CD4-positive, alpha-beta T cell (primary cell): ENCODE measurements at regions of chr11 and their contacts with region 1.

Region 1: DNA sequence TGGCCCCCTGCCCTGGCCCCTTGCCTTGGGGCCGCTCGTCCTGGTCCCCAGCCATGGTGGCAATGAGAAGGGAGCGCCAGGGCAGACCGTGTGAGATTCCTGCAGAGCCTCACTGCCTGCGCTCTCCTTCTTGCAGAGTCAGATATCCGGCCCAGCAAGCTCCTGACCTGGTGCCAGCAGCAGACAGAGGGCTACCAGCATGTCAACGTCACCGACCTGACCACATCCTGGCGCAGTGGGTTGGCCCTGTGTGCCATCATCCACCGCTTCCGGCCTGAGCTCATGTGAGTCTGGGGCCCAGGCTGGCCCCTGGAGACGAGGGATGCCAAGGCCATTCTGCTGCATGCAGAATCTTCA is 114.1 kb downstream of the MICAL2 start:
- DNase-seq: peak; percentile 69 to 97 (median 83)
- ATAC-seq: peak; percentile 90
- H3K4me3 ChIP-seq: peak overlapping the region; percentile 49
- H3K4me3 Mint-ChIP-seq: peak overlapping the region; percentile 78
- H3K27ac ChIP-seq: peak overlapping the region; percentile 67 to 79
- H3K27ac Mint-ChIP-seq: peak overlapping the region; percentile 92
- H3K4me1 ChIP-seq: peaks cover 48% of the 10 kb centered on the region
- H3K4me1 Mint-ChIP-seq: peaks cover 51% of the 10 kb centered on the region
- H3K27me3 ChIP-seq: no peaks in the 10 kb centered on the region
- H3K27me3 Mint-ChIP-seq: no peaks in the 10 kb centered on the region
- CTCF ChIP-seq: no peak

Region 2: DNA sequence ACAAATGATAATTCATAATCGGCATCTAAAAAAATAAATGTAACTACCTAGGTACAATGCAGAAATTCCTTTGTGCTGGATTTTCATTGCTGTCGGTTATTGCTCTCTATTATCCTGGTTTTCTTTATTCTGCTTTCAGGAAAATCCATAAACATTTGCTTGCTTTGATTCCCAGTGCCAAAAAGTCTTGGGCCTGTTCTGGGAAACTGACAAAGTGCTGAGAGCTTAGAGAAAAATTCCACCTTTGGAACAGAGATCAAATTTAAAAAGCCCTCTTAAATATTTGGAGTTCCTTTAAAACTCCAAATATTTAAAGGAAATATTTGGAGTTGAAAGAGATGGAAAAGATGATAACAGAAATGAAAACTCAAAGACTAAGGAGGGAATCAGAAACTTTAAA is 1279.3 kb before region 1 on chr11:
- CTCF ChIA-PET with region 1: no interaction called
- POLR2A ChIA-PET with region 1: no interaction called
- intact Hi-C with region 1: no loop called
- DNase-seq: no peak
- ATAC-seq: no peak
- H3K4me3 ChIP-seq: no peak overlapping the region
- H3K4me3 Mint-ChIP-seq: no peak overlapping the region
- H3K27ac ChIP-seq: no peak overlapping the region
- H3K27ac Mint-ChIP-seq: no peak overlapping the region
- H3K4me1 ChIP-seq: no peaks in the 10 kb centered on the region
- H3K4me1 Mint-ChIP-seq: no peaks in the 10 kb centered on the region
- H3K27me3 ChIP-seq: no peaks in the 10 kb centered on the region
- H3K27me3 Mint-ChIP-seq: peaks cover 20% of the 10 kb centered on the region
- CTCF ChIP-seq: no peak

Region 3: DNA sequence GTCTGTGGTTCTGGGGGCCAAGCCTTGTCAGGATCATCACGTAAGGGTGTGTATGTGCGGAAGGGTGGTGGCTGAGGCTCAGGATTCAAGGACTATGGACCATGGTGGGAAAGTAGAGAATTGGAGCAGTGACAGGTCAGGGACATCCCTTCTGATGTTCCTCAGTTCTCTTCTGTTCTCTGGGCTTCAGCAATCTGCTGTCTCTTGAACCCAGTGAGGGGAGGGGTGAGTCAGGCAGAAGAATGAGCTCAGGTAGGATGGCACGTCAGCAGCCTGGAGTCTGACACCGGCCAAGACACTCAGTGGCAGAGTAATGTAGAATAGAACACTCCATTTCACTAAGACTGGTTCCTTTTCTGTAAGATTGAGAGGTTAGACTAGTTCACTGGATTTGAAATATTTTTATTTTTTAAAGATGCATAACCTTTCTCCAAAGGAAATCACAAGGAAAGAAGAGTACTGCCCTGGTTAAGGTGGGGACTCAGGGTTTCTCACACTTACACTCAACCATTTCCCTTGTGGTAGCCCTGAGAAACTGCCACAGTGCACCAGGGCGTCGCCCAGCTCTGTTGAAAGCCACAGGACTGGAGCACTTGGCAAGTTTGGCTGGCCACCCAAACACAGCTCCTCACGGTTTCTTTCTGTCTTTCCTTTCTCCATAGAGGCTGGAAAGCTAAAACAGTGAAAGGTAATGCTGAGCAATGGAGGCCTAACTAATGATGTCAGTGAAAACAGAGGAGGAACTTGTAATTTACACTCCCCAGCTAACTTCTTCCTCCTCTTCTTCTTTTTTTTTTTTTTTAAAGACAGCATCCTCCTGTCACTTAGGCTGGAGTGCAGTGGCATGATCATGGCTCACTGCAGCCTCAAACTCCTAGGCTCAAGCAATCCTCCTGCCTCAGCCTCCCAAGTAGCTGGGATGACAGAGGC is 137.2 kb before region 1 on chr11:
- CTCF ChIA-PET with region 1: no interaction called
- POLR2A ChIA-PET with region 1: interaction called, 13 read pairs
- intact Hi-C with region 1: no loop called
- DNase-seq: peak in 6 of 14 experiments; percentile 15 to 82 (median 58)
- ATAC-seq: peak; percentile 79
- H3K4me3 ChIP-seq: no peak overlapping the region
- H3K4me3 Mint-ChIP-seq: peak overlapping the region; percentile 59
- H3K27ac ChIP-seq: peak overlapping the region in 1 of 2 donors; percentile 46
- H3K27ac Mint-ChIP-seq: peak overlapping the region; percentile 79
- H3K4me1 ChIP-seq: peaks cover 65% of the 10 kb centered on the region
- H3K4me1 Mint-ChIP-seq: peaks cover 72% of the 10 kb centered on the region
- H3K27me3 ChIP-seq: no peaks in the 10 kb centered on the region
- H3K27me3 Mint-ChIP-seq: no peaks in the 10 kb centered on the region
- CTCF ChIP-seq: no peak

Region 4: GRCh38 chr11:12110201-12110713 is 114.3 kb before region 1 on chr11 and contains the start of gene MICAL2:
- CTCF ChIA-PET with region 1: no interaction called
- POLR2A ChIA-PET with region 1: interaction called, 13 read pairs
- intact Hi-C with region 1: loop called in 1 of 2 experiments (anchors 5 kb)
- DNase-seq: peak; percentile 53 to 93 (median 73)
- ATAC-seq: peak; percentile 97
- H3K4me3 ChIP-seq: peak within 1 kb of the TSS; percentile 65
- H3K4me3 Mint-ChIP-seq: peak within 1 kb of the TSS; percentile 85
- H3K27ac ChIP-seq: no peak within 1 kb of the TSS
- H3K27ac Mint-ChIP-seq: peak within 1 kb of the TSS; percentile 12
- H3K4me1 ChIP-seq: peaks cover 32% of the 10 kb centered on the region
- H3K4me1 Mint-ChIP-seq: peaks cover 22% of the 10 kb centered on the region
- H3K27me3 ChIP-seq: no peaks in the 10 kb centered on the region
- H3K27me3 Mint-ChIP-seq: no peaks in the 10 kb centered on the region
- CTCF ChIP-seq: no peak
- total RNA-seq, gene MICAL2: 12.8 to 14.1 TPM

Region 5: GRCh38 chr11:12137938-12138731 is 86.4 kb before region 1 on chr11:
- CTCF ChIA-PET with region 1: no interaction called
- POLR2A ChIA-PET with region 1: interaction called, 11 read pairs
- intact Hi-C with region 1: no loop called
- DNase-seq: no peak
- ATAC-seq: no peak
- H3K4me3 ChIP-seq: no peak overlapping the region
- H3K4me3 Mint-ChIP-seq: no peak overlapping the region
- H3K27ac ChIP-seq: no peak overlapping the region
- H3K27ac Mint-ChIP-seq: peak overlapping the region; percentile 78
- H3K4me1 ChIP-seq: peaks cover 55% of the 10 kb centered on the region
- H3K4me1 Mint-ChIP-seq: peaks cover 67% of the 10 kb centered on the region
- H3K27me3 ChIP-seq: no peaks in the 10 kb centered on the region
- H3K27me3 Mint-ChIP-seq: no peaks in the 10 kb centered on the region
- CTCF ChIP-seq: no peak

Region 6: GRCh38 chr11:12189543-12190235 is 34.8 kb before region 1 on chr11:
- CTCF ChIA-PET with region 1: interaction called, 3 read pairs
- POLR2A ChIA-PET with region 1: interaction called, 69 read pairs
- intact Hi-C with region 1: loop called (anchors 2 to 5 kb)
- DNase-seq: peak; percentile 25 to 77 (median 40)
- ATAC-seq: peak; percentile 53
- H3K4me3 ChIP-seq: peak overlapping the region; percentile 32
- H3K4me3 Mint-ChIP-seq: peak overlapping the region; percentile 66
- H3K27ac ChIP-seq: peak overlapping the region in 1 of 2 donors; percentile 14
- H3K27ac Mint-ChIP-seq: peak overlapping the region; percentile 73
- H3K4me1 ChIP-seq: peaks cover 31% of the 10 kb centered on the region
- H3K4me1 Mint-ChIP-seq: peaks cover 50% of the 10 kb centered on the region
- H3K27me3 ChIP-seq: no peaks in the 10 kb centered on the region
- H3K27me3 Mint-ChIP-seq: no peaks in the 10 kb centered on the region
- CTCF ChIP-seq: no peak

Region 7: DNA sequence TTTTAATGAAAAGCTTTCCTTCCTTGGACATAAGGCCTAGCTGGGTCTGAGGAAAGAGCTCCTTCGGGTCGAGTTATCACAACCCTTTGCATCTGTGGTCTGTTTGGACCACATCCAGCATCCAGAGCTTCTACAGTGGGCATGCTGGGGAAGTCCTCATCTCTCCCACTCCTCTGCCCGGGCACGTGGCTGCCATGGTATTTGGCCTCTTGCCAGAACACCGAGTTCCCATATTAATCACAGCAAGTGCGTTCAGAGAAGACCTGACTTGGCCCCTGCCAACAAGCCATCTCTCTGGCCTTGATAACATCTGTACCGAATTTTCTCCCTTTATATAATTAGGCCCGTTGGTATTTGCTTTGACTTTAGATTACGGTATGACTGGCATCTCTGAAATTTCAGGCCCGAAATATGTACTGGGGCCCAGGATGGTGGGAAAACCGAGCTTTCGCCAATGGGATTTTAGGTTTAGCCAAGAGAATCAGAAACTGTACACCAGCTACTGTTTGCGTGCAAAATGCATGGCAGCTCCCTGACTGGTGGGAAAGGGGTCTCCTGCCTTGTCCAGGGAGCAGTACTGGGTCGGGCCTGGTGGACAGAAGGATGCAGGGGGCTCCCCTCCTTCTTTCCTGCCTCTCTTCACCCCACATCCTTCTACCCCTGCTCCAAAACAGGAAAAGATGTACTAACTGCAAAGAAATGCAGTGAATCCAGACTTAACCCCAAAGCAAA is 24.1 kb before region 1 on chr11:
- CTCF ChIA-PET with region 1: interaction called, 3 read pairs
- POLR2A ChIA-PET with region 1: interaction called, 69 read pairs
- intact Hi-C with region 1: loop called in 1 of 2 experiments (anchors 2 kb)
- DNase-seq: peak in 2 of 14 experiments; percentile 27 to 28
- ATAC-seq: no peak
- H3K4me3 ChIP-seq: no peak overlapping the region
- H3K4me3 Mint-ChIP-seq: no peak overlapping the region
- H3K27ac ChIP-seq: peak overlapping the region in 1 of 2 donors; percentile 22
- H3K27ac Mint-ChIP-seq: peak overlapping the region; percentile 89
- H3K4me1 ChIP-seq: peaks cover 53% of the 10 kb centered on the region
- H3K4me1 Mint-ChIP-seq: peaks cover 70% of the 10 kb centered on the region
- H3K27me3 ChIP-seq: no peaks in the 10 kb centered on the region
- H3K27me3 Mint-ChIP-seq: no peaks in the 10 kb centered on the region
- CTCF ChIP-seq: no peak

Region 8: DNA sequence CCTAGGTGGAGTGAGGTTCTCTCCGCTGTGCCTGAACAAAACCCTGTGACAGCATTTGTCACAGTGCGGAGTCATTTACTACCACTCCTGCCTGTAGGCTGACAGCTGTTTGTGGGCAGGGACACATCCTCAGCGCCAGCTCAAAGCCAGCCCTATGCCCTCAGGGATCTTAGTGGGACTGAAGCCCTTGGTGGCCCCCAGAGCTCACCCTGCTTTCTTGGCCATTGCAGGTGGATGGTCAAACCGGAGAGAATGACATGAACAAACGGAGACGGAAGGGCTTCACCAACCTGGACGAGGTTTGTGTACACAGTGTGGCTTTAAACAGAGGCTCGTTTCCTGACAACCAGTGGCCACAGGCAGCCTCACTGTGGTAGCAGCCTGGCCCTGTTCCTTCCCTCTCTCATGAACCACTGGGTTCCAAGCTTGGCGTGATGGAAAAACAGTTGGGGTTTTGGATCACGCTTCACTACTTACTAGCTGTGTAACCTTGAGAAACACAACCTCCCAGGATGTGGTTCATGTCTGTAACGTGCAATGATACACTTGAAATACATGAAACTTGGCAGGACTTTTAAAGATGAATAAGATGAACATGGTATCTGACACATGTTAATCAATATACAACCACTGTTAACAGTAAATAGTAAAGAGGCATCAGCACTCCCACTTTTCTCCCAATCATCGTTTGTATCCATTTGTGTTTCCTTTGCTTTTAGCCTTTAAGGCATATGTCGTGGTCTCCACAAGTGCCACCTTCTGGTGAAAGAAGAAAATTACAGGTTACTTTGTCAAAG is 11.6 kb after region 1 on chr11:
- CTCF ChIA-PET with region 1: interaction called, 3 read pairs
- POLR2A ChIA-PET with region 1: interaction called, 33 read pairs
- intact Hi-C with region 1: no loop called
- DNase-seq: peak in 9 of 14 experiments; percentile 4 to 83 (median 40)
- ATAC-seq: peak; percentile 85
- H3K4me3 ChIP-seq: peak overlapping the region; percentile 7
- H3K4me3 Mint-ChIP-seq: peak overlapping the region; percentile 82
- H3K27ac ChIP-seq: peak overlapping the region in 1 of 2 donors; percentile 59
- H3K27ac Mint-ChIP-seq: peak overlapping the region; percentile 92
- H3K4me1 ChIP-seq: peaks cover 15% of the 10 kb centered on the region
- H3K4me1 Mint-ChIP-seq: peaks cover 30% of the 10 kb centered on the region
- H3K27me3 ChIP-seq: no peaks in the 10 kb centered on the region
- H3K27me3 Mint-ChIP-seq: no peaks in the 10 kb centered on the region
- CTCF ChIP-seq: peak; percentile 92

Region 9: DNA sequence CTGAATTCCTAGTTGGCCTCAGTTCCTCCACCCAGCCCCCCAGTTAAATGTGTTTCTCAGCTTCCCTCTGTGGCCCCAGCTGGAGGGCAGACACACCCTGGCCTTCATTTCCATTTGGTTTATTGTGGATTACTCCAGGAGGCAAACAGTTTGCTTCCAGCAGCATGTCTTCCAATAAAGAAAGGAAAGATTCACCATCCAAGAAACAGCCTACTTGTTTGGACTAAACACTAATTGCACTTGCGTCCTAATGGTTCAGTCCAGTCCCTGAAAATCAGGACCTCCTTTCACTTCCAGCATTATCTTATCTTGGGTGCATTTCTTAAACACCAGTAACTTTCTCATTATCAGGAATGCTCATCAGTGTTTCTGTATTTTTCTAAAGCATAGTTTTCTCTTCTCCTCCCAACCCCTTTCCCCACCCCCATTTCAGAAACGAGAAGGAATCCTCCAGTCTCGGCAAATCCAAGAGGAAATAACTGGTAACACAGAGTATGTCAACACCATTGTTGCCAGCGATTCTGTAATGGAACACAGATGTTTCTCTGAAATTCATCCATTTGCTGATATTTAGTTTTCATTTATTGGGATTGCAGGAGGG is 283.7 kb after region 1 on chr11:
- CTCF ChIA-PET with region 1: no interaction called
- POLR2A ChIA-PET with region 1: no interaction called
- intact Hi-C with region 1: no loop called
- DNase-seq: no peak
- ATAC-seq: no peak
- H3K4me3 ChIP-seq: no peak overlapping the region
- H3K4me3 Mint-ChIP-seq: no peak overlapping the region
- H3K27ac ChIP-seq: no peak overlapping the region
- H3K27ac Mint-ChIP-seq: no peak overlapping the region
- H3K4me1 ChIP-seq: no peaks in the 10 kb centered on the region
- H3K4me1 Mint-ChIP-seq: no peaks in the 10 kb centered on the region
- H3K27me3 ChIP-seq: no peaks in the 10 kb centered on the region
- H3K27me3 Mint-ChIP-seq: no peaks in the 10 kb centered on the region
- CTCF ChIP-seq: no peak